H1 (cell line): ENCODE measurements at regions of chr1 and their contacts with region 1.

Region 1: GRCh38 chr1:27830621-27831424 is at the start of gene PPP1R8:
- DNase-seq: peak; percentile 81 to 90
- H3K4me3 ChIP-seq: peak within 1 kb of the TSS; percentile 69 to 96 (median 82)
- H3K27ac ChIP-seq: peak within 1 kb of the TSS; percentile 95
- H3K4me1 ChIP-seq: no peaks in the 10 kb centered on the region; a peak in 2 of 7 replicates
- H3K27me3 ChIP-seq: no peaks in the 10 kb centered on the region
- CTCF ChIP-seq: no peak
- EP300 ChIP-seq: no peak
- POLR2A ChIP-seq: peak; percentile 97 to 98
- RAD21 ChIP-seq: no peak; a peak in 1 of 4 replicates
- total RNA-seq, gene PPP1R8: 50.5 and 51.8 TPM in 2 replicates

Region 2: DNA sequence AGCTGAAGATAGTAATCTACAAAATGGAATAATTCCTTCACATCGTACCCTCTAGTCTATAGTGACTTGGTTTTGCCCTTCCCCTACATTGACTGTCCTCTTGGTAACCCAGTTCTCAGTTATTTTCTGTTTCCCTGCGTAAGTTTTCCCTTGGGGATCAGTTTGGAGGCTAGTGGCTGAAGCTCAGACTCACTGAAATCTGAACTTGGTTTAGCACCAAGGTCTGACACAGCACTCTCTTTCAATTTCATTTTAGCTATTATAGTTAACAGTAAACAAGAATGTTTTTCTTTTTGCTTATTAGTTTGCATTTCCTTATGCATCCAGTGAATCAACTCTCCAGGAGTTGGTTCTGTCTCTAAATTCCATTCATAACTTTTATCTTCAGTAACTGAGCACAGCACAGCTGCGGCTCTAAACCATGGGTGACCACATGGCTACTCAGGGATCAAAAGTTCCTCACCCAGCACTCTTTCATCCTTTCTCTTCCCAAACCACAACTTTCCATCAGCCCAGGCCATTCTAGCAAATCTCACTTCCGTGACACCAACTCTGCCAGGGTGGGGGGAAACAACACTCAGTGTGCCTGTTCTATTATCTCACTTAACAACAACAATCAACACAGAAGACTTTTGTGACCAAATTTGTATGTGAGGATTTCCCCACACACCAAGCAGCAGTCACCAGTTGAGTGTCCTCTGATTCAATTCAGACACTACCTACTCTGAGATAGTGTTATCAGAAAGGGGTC is 141.2 kb before region 1 on chr1:
- CTCF ChIA-PET with region 1: no interaction called
- POLR2A ChIA-PET with region 1: no interaction called
- DNase-seq: no peak
- H3K4me3 ChIP-seq: no peak overlapping the region
- H3K27ac ChIP-seq: no peak overlapping the region
- H3K4me1 ChIP-seq: peaks cover 4 to 11% (median 8%) of the 10 kb centered on the region in 4 experiments
- H3K27me3 ChIP-seq: no peaks in the 10 kb centered on the region
- CTCF ChIP-seq: no peak
- EP300 ChIP-seq: no peak
- POLR2A ChIP-seq: no peak
- RAD21 ChIP-seq: no peak

Region 3: GRCh38 chr1:27704958-27705357 is 125.9 kb before region 1 on chr1:
- CTCF ChIA-PET with region 1: no interaction called
- POLR2A ChIA-PET with region 1: no interaction called
- DNase-seq: no peak
- H3K4me3 ChIP-seq: no peak overlapping the region
- H3K27ac ChIP-seq: no peak overlapping the region
- H3K4me1 ChIP-seq: no peaks in the 10 kb centered on the region
- H3K27me3 ChIP-seq: no peaks in the 10 kb centered on the region
- CTCF ChIP-seq: no peak
- EP300 ChIP-seq: no peak
- POLR2A ChIP-seq: no peak
- RAD21 ChIP-seq: no peak

Region 4: DNA sequence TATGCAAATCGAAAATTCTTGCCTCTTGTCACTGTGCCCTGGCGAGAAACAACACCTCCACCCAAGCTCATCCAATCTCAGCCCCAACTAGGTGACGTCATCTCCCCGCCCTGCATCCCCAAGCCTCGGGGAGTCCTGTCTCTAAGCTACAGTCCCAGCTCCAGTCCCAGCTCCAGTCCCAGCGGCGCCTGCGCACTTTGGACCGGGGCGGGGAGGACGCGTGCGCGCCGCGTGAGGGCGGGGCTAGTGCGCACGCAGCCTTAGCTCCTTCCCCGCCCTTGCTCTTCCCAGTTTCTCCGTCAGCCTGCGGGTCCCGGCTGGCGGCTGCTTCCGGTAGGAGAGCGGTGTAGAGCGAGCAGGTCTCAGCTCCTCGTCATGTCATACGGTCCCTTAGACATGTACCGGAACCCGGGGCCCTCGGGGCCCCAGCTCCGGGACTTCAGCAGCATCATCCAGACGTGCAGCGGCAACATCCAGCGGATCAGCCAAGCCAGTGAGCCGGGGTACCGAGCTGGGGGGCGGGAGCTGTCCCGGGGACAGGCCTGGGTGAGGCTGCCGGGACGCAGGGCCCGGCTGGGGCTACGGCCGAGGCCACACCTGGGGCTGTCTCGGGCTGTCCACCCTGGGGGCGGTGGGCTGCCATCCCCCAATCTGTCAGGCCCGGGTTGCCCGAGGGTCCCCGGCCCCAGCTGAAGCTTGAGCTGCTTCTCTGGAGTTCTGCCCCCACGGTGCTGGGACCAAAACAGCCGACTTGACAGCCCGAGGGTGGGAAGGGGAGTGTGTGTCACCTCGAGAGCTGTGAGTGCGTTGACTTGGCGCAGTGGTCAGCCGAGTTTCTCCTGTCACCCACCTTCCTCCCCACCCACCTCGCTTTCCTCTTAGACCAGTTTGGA is 57.6 kb before region 1 on chr1 and contains the start of gene STX12:
- CTCF ChIA-PET with region 1: no interaction called
- POLR2A ChIA-PET with region 1: interaction called, 23 read pairs
- DNase-seq: peak; percentile 96 to 97
- H3K4me3 ChIP-seq: peak within 1 kb of the TSS; percentile 71 to 95 (median 89)
- H3K27ac ChIP-seq: no peak within 1 kb of the TSS
- H3K4me1 ChIP-seq: peaks cover 0 to 2% (median 0%) of the 10 kb centered on the region in 4 experiments; a peak in 2 of 7 replicates
- H3K27me3 ChIP-seq: no peaks in the 10 kb centered on the region
- CTCF ChIP-seq: no peak
- EP300 ChIP-seq: no peak
- POLR2A ChIP-seq: peak in 1 of 2 experiments; percentile 67; a peak in 1 of 3 replicates
- RAD21 ChIP-seq: no peak
- total RNA-seq, gene STX12: 11.0 and 11.6 TPM in 2 replicates

Region 5: GRCh38 chr1:27915082-27915598 is 84.3 kb after region 1 on chr1:
- CTCF ChIA-PET with region 1: no interaction called
- POLR2A ChIA-PET with region 1: no interaction called
- DNase-seq: no peak
- H3K4me3 ChIP-seq: peak overlapping the region in 1 of 4 experiments; percentile 30; a peak in 3 of 8 replicates
- H3K27ac ChIP-seq: no peak overlapping the region; the same call in 1 of the 2 replicates
- H3K4me1 ChIP-seq: no peaks in the 10 kb centered on the region; a peak in 2 of 7 replicates
- H3K27me3 ChIP-seq: peaks cover 0 to 9% (median 8%) of the 10 kb centered on the region in 4 experiments; a peak in 6 of 7 replicates
- CTCF ChIP-seq: no peak
- EP300 ChIP-seq: no peak
- POLR2A ChIP-seq: no peak
- RAD21 ChIP-seq: no peak